Panc1 (cell line): ENCODE measurements at regions of chr11 and their contacts with region 1.

Region 1: GRCh38 chr11:65558002-65558931 is at the start of gene LTBP3:
- DNase-seq: no peak
- ATAC-seq: peak; percentile 47
- H3K4me3 ChIP-seq: peak within 1 kb of the TSS; percentile 50 to 60
- H3K27ac ChIP-seq: peak within 1 kb of the TSS; percentile 90
- H3K4me1 ChIP-seq: peaks cover 69% of the 10 kb centered on the region
- H3K27me3 ChIP-seq: no peaks in the 10 kb centered on the region
- CTCF ChIP-seq: no peak
- total RNA-seq, gene LTBP3: 133 TPM

Region 2: DNA sequence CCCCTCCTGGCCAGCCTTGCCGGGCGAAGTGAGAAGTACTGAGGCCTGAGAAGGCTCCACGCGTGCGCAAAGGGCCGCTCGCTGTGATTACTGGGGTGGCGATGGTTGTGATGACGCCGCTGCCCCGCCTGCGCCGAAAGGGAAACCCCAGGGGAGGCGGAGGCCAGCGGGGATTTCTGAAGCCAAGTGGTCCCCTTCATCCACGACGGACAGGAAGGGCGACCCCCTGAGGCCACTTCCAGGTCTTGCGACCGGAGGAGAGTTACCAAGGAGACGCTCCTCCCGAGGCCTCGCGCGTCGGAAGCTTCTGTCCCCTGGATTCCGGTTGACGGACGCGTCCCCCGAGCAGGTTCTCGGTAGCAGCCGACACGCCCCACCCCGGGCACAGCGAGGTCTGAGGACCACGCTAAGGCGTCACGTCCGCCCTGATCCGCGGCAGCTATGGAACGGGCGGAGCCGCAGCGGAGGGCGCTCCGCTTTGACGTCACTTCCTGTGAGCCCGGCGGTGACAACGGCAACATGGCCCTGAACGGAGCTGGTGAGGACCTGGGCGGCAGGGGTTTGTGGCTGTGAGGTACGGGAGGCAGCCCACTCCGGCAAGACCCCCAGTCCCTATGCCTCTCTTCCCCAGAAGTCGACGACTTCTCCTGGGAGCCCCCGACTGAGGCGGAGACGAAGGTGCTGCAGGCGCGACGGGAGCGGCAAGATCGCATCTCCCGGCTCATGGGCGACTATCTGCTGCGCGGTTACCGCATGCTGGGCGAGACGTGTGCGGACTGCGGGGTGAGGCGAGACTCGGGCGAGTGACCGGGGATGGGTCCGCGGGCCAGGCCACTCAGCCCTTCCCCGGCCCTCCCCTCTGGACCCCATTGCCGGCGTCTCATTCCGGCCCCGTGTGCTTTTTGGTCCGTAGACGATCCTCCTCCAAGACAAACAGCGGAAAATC is 12.0 kb after region 1 on chr11 and contains the start of gene ZNRD2:
- CTCF ChIA-PET with region 1: interaction called, 15 read pairs
- POLR2A ChIA-PET with region 1: interaction called, 9 read pairs
- in situ Hi-C with region 1: no loop called
- intact Hi-C with region 1: no loop called
- DNase-seq: peak; percentile 94
- ATAC-seq: peak; percentile 82
- H3K4me3 ChIP-seq: peak within 1 kb of the TSS; percentile 82 to 93
- H3K27ac ChIP-seq: peak within 1 kb of the TSS; percentile 94
- H3K4me1 ChIP-seq: peaks cover 25% of the 10 kb centered on the region
- H3K27me3 ChIP-seq: no peaks in the 10 kb centered on the region
- CTCF ChIP-seq: peak; percentile 27; the same call in 1 of the 2 replicates
- total RNA-seq, gene ZNRD2: 61.2 TPM

Region 3: GRCh38 chr11:65661599-65662246 is 103.5 kb after region 1 on chr11:
- CTCF ChIA-PET with region 1: interaction called, 10 read pairs
- POLR2A ChIA-PET with region 1: no interaction called
- in situ Hi-C with region 1: no loop called
- intact Hi-C with region 1: no loop called
- DNase-seq: no peak
- ATAC-seq: no peak
- H3K4me3 ChIP-seq: peak overlapping the region; percentile 81 to 100
- H3K27ac ChIP-seq: peak overlapping the region; percentile 93
- H3K4me1 ChIP-seq: peaks cover 11% of the 10 kb centered on the region
- H3K27me3 ChIP-seq: no peaks in the 10 kb centered on the region
- CTCF ChIP-seq: no peak